Calu3 (cell line): ENCODE measurements at regions of chr17 and their contacts with region 1.

Region 1: GRCh38 chr17:78341559-78342448 is 18.1 kb downstream of the SOCS3 start:
- DNase-seq: peak; percentile 81
- H3K4me3 Mint-ChIP-seq: peak overlapping the region; percentile 62
- H3K27ac Mint-ChIP-seq: peak overlapping the region; percentile 85
- H3K4me1 Mint-ChIP-seq: peaks cover 69% of the 10 kb centered on the region
- H3K27me3 Mint-ChIP-seq: no peaks in the 10 kb centered on the region
- CTCF ChIP-seq: no peak

Region 2: GRCh38 chr17:78313735-78314648 is 27.8 kb before region 1 on chr17:
- CTCF ChIA-PET with region 1: interaction called, 13 read pairs
- intact Hi-C with region 1: loop called (anchors 2 kb)
- DNase-seq: peak; percentile 98
- H3K4me3 Mint-ChIP-seq: peak overlapping the region; percentile 67
- H3K27ac Mint-ChIP-seq: peak overlapping the region; percentile 47
- H3K4me1 Mint-ChIP-seq: peaks cover 53% of the 10 kb centered on the region
- H3K27me3 Mint-ChIP-seq: no peaks in the 10 kb centered on the region
- CTCF ChIP-seq: no peak

Region 3: DNA sequence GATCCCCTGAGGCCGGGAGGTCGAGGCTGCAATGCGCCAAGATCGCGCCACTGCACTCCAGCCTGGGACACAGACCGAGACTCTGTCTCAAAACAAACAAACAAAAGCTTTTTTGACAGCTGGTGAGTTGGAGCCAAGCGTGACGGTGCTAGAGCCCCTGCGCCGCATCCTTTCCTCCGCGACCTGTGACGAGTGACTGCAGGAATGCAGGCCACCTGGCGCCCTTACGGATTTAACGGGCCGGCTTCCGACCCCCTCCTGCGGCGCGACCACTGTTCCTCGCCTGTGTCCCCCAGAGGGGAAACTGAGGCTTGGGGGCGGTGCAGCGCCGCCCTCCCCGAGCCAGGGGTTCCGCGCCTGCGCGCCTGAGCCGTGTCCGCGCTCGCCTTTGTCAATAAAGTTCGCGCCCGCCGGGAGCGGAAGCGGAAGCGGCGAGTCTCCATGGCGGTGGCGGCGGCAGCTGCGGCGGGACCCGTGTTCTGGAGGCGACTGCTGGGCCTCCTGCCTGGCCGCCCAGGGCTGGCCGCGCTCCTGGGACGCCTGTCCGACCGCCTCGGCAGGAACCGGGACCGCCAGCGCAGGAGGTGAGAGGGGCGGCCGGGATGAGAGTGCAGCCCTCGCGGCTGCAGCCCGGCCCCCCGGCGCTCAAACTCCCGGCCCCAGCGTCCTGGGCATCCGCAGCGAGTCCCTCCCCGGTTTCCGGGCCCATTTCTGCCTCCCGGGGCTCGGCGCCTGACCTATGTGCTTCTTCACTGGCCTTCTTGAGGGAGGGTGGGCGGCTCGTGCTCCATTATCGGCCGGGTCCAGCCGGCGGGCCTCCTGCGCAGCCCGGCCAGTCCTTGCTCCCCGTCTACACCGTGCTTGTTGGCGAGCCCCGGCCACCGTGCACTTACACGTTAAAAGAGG is 36.7 kb after region 1 on chr17 and contains the start of gene PGS1:
- CTCF ChIA-PET with region 1: no interaction called
- intact Hi-C with region 1: no loop called
- DNase-seq: peak; percentile 83
- H3K4me3 Mint-ChIP-seq: peak within 1 kb of the TSS; percentile 88
- H3K27ac Mint-ChIP-seq: peak within 1 kb of the TSS; percentile 42
- H3K4me1 Mint-ChIP-seq: peaks cover 33% of the 10 kb centered on the region
- H3K27me3 Mint-ChIP-seq: no peaks in the 10 kb centered on the region
- CTCF ChIP-seq: no peak
- total RNA-seq, gene PGS1: 39.5 and 42.6 TPM in 2 replicates